WTC11 (cell line): ENCODE measurements at regions of chr1 and their contacts with region 1.

Region 1: DNA sequence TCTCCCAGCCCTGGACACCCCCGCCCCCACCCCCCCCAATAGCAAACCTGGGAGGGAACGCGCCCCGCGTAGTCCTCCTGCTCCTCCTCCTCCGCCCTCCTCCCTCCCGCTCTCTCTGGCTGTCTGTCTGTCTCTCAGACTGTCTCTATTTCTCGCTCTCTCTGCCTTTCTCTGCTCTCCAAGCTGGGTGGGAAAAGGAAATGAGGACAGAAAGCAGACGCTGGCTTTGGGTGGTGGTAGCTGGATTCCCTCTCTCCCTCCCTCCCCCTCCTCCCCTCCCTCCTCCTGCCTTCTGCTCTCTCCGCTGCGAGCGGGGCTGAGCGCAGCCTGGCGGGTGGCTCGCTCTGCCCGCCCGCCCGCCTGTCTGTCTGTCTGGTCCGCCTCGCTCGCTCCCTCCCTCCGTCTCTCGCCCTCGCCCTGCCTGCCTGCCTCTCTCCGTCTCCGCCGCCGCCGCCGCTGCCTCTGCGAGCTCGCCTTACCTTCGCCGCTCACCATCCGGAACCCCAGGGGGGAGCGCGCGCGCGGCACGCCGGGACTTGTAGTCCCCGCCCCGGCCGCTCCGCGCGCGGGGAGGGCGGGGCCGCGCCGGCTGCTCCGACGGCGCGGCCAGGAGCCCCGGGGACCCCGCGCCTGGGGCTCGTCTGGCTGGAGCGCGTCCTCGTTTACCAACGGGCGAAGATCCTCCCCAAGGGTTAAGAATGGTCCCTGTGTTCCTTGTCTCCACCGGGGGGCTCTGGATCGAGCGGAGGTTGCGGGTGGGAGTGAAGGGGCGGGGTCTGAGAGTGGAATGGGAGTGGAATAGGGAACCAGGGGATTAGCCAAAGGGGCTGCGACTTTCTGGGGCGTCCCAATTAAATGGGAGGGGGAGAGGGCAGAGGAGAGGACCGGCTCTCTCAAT is at the start of gene AHDC1:
- DNase-seq: peak; percentile 96
- ATAC-seq: peak; percentile 11
- H3K4me3 Mint-ChIP-seq: peak within 1 kb of the TSS; percentile 92
- H3K27ac Mint-ChIP-seq: peak within 1 kb of the TSS; percentile 88
- H3K4me1 Mint-ChIP-seq: peaks cover 61% of the 10 kb centered on the region
- H3K27me3 Mint-ChIP-seq: no peaks in the 10 kb centered on the region; the same call in 1 of the 2 replicates
- CTCF ChIP-seq: no peak
- total RNA-seq, gene AHDC1: 31.6 to 49.0 TPM (median 32.6 TPM) in 3 replicates

Region 2: DNA sequence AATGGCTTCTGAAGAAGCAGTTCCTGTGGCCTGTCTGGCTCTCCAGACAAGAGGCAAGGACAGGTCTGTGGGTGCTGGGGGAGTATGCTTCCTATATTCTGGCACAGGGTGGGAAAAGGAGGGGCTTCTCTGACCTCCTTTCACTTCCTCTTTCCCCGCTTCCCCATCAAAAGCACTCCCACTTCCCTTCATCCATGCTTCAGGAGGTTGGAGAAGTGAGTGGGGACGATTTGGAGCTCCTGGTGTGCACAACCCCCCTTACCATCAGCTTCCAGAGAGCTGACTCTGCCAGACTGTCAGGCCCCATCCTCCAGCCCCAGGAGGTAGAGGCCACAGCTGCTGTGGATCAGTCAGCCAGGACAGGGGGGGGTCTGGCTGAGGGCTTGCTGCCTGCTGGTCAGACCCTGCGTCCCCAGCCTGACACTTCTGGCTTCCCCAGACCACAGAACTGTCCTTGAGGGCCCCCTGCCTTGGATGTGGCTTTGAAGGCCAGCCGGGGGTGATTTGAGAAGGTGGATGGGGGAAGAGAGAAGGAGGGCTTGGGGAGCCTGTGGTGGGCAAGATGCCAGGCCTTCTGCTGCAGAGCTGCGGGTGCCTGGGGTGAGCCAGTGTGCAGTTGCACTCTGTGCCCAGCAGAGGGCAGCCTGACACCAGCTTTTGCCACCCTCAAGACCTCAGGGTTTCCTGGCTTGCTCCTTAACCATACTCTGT is 303.4 kb before region 1 on chr1:
- CTCF ChIA-PET with region 1: interaction called, 28 read pairs
- POLR2A ChIA-PET with region 1: no interaction called
- DNase-seq: peak; percentile 82
- ATAC-seq: peak; percentile 79
- H3K4me3 Mint-ChIP-seq: no peak overlapping the region
- H3K27ac Mint-ChIP-seq: peak overlapping the region; percentile 48; the same call in 1 of the 2 replicates
- H3K4me1 Mint-ChIP-seq: peaks cover 25% of the 10 kb centered on the region
- H3K27me3 Mint-ChIP-seq: no peaks in the 10 kb centered on the region
- CTCF ChIP-seq: peak; percentile 100

Region 3: DNA sequence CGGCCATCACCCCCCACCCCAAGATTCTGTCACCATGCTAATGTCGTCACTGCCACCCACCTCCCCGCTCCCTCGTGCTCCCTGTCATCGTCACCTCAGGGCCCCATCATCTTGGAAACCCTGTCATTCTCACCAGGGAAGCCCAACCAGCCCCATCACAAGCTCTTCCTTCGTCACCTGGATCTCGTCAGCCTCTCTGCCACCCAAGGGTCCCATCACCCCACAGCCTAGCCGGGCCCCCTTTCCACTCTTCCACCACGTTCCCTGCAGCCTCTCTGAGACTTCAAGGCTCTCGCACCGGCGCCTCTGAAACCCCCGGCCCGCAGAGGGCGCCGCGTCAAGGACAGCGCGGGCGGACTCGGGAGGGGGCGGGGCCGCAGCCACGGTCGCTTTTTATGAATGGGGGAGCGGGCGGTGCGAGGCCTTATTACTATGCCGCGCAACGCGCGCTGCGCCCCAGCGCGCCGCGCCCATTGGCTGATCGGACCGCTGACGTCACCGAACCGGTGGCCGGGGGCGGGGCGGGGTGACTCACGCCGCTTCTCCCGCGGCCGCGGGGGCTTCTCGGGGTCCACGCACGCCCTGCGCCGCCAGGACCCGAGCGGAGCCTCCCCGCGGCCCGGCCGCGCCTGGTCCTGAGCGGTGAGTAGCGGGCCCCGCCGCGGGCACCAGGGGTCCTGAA is 211.7 kb before region 1 on chr1 and contains the start of gene GPR3:
- CTCF ChIA-PET with region 1: interaction called, 74 read pairs
- POLR2A ChIA-PET with region 1: no interaction called
- DNase-seq: peak; percentile 96
- ATAC-seq: peak; percentile 72
- H3K4me3 Mint-ChIP-seq: peak within 1 kb of the TSS; percentile 91
- H3K27ac Mint-ChIP-seq: peak within 1 kb of the TSS; percentile 95
- H3K4me1 Mint-ChIP-seq: peaks cover 24% of the 10 kb centered on the region
- H3K27me3 Mint-ChIP-seq: peaks cover 4% of the 10 kb centered on the region
- CTCF ChIP-seq: peak; percentile 20; the same call in 1 of the 2 replicates
- total RNA-seq, gene GPR3: 7.8 to 12.4 TPM (median 7.8 TPM) in 3 replicates

Region 4: GRCh38 chr1:27496604-27497155 is 107.2 kb before region 1 on chr1:
- CTCF ChIA-PET with region 1: interaction called, 24 read pairs
- POLR2A ChIA-PET with region 1: no interaction called
- DNase-seq: peak; percentile 76
- ATAC-seq: peak; percentile 97
- H3K4me3 Mint-ChIP-seq: peak overlapping the region; percentile 53
- H3K27ac Mint-ChIP-seq: peak overlapping the region; percentile 90
- H3K4me1 Mint-ChIP-seq: peaks cover 23% of the 10 kb centered on the region
- H3K27me3 Mint-ChIP-seq: no peaks in the 10 kb centered on the region
- CTCF ChIP-seq: no peak

Region 5: DNA sequence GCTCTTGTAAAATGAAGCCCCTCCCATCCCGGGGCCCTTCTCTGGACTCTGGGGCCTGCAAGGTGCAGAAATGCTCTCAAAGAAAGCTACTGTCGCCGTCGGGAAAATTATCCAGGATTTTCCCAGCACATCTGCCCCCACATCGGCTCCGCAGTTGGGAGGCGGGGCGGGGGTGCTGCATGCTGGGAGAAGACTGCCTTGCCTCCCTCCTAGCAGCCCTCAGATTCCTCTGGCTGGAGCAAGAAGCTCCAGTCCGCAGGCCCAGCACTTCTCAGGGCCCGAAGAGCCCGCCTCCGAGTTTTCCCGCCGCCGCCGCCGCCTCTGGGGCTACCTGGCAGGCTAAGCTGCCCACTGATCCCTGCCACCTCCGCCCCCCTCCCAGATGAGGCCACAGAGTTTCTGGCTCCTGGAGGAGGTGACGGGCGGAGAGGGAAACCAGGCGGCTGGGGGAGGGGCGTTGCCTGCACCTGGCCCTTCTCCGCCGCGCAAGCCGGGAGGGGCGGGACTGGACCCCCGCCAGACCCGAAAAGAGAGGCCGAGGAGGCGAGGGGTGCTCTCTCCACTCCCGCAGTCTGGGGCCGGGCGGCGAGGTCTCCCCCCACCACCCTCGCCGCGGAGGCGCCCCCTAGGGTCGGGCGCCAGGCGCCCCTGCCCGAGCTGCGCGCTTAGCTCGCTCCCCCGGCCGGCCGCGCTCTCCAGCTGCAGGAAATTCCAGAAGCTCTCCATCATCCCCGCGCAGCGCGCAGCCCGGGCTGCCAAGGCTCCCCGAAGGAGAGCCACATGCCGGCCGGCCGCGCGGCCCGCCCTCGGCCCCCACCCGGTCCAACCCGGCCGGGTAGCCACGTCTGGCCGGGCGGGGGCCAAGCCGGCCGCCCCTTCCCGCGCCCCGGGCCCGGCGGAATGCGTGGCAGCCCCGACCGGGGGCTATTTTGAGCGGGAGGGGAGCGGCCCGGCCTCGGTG is 28.8 kb before region 1 on chr1:
- CTCF ChIA-PET with region 1: interaction called, 366 read pairs
- POLR2A ChIA-PET with region 1: interaction called, 33 read pairs
- DNase-seq: peak; percentile 86
- ATAC-seq: peak; percentile 33
- H3K4me3 Mint-ChIP-seq: peak overlapping the region; percentile 63
- H3K27ac Mint-ChIP-seq: peak overlapping the region; percentile 71; the same call in 1 of the 2 replicates
- H3K4me1 Mint-ChIP-seq: peaks cover 56% of the 10 kb centered on the region
- H3K27me3 Mint-ChIP-seq: no peaks in the 10 kb centered on the region
- CTCF ChIP-seq: peak; percentile 28; the same call in 1 of the 2 replicates

Region 6: DNA sequence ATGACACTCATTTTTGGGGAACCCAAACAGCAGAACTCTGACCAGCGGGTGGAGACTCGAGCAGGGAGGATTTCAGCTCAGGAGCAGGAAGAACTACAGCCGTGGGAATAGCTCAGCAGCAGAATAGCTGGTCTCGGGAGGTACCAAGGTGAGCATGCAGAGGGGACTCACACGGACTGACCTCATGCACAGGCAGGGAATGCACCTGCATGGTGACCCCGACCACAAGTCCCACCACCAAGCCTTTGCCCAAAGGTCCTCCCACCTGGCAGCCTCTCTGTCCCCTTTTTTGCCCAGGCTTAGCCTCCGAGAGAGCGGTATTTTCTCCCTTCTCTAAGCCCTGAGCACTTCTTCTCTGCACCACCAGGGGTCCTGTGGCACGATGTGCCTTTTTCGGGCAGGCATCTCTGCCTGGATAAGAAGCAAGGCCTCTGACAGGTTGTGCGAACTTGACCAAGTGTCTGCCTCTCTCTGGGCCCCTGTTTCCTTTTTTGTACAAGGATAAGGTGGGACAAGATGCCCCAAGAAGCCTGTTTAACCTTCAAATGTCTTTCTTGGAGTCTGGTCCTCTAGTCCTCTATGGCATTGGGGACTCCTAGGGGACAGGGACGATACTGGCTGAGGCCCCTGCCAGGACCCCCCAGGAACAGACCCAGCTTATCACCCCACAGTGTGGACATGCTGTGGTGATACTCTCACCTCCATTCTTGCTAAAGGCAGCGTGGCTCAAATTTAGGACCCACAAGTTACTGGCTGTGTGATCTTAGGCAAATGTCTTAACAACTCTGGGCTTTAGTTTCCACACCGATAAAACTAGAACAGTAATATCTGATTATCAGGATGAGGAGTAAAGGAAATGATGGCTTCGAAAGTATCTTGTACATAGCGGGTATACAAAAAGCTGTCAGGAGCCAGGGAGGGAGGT is 40.0 kb after region 1 on chr1:
- CTCF ChIA-PET with region 1: interaction called, 20 read pairs
- POLR2A ChIA-PET with region 1: no interaction called
- DNase-seq: peak; percentile 75
- ATAC-seq: peak; percentile 96
- H3K4me3 Mint-ChIP-seq: no peak overlapping the region
- H3K27ac Mint-ChIP-seq: no peak overlapping the region
- H3K4me1 Mint-ChIP-seq: peaks cover 6% of the 10 kb centered on the region
- H3K27me3 Mint-ChIP-seq: no peaks in the 10 kb centered on the region
- CTCF ChIP-seq: peak; percentile 79